Activated naive CD4-positive, alpha-beta T cell treated with anti-CD3 and anti-CD28 coated beads for 36 hours (primary cell): ENCODE measurements at regions of chr2 and their contacts with region 1.

Region 1: DNA sequence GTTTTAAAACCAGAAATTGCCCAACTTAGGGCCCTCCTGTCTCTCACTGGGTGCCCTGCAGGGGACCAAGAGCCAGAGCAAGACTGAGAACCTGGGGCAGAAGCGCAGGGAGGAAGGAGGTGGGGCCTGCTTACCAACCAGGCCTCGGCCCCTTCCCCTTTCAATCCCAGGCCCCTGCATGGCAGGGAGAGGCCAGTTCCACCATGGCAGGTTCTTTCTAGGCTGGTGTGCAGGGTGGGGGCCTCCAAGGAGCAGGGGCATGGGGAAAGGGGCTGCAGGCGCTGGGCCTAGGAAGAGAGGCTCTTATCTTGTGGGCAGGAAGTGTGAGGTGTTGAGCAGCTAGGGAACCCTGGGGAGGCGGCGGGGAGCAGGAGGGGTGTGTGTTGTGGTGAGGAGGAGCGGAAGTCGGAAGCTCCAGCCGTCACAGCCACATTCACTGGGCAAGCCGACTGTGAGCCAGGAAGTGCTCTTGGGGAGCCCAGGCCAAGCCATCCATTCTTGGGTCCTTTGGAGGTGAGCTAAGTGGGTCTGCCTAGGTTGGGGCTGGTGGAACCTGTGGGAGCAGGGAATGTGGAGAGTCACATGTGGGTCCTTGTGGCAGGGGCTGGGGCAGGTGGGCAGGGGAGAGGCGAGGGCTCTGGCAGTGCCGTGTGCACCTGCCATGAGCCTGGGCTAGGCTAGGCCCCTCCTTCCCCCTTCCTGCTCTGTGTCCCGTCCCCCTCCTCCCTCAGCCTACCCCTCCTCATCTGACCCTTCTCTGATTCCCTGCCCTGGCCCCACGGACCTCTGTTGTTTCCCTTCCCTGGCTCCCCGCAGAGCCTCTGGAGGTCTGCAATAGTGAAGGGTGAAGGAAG is at the start of gene PSD4:
- DNase-seq: peak; percentile 96
- H3K4me3 Mint-ChIP-seq: peak within 1 kb of the TSS; percentile 95
- H3K27ac Mint-ChIP-seq: peak within 1 kb of the TSS; percentile 97
- H3K4me1 Mint-ChIP-seq: peaks cover 77% of the 10 kb centered on the region
- H3K27me3 Mint-ChIP-seq: no peaks in the 10 kb centered on the region
- total RNA-seq, gene PSD4: 85.9 to 87.4 TPM

Region 2: DNA sequence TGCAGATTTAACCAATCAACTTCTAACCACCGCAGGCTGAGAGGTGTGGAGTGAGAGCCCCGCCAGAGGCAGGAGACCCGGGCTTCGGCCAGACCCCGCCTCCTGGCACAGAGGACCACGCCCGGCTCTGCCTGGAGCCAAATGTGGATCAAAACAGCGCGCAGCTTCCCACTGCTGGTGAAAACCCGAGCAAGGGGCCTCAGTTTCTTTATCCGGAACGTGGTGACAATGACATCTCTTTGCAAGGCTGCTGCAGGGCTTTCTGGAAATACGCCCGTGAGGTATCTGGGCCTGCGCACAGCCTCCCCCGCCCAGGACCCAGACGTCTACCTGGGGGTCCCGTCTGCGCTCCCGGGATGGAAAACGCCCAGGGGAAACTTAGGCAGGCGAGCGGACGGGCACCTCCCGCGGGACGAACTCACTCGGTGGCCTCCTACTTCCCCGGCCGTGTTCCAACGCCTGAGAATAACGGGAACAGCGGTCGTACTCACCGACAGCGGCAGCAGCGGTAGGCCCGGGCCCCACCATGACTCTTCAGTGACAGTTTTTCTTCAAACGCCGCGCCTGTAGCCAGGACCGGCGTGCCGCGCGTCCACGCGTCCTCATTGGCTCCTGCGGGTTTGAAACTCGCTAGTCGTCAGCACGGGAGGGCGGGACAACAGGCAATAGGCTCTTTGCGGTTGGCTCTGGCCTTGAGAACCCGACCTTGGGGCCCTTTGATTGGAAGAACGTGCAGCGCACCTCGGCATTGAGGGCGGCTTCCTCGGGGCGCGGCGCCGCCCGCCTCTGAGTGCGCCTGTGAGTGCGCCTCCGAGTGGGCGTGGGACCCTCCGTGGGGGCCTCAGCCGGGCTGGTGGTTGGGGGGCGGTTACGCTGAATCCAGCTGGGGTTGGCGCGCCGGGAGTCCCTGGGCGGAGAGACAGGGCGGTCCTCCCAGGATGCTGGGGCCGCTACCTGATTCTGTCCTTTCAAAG is 409.4 kb before region 1 on chr2 and contains the start of gene CKAP2L:
- CTCF ChIA-PET with region 1: no interaction called
- intact Hi-C with region 1: loop called (anchors 5 kb)
- DNase-seq: peak; percentile 99
- H3K4me3 Mint-ChIP-seq: peak within 1 kb of the TSS; percentile 98
- H3K27ac Mint-ChIP-seq: peak within 1 kb of the TSS; percentile 93
- H3K4me1 Mint-ChIP-seq: peaks cover 18% of the 10 kb centered on the region
- H3K27me3 Mint-ChIP-seq: no peaks in the 10 kb centered on the region
- total RNA-seq, gene CKAP2L: 49.2 to 50.8 TPM

Region 3: DNA sequence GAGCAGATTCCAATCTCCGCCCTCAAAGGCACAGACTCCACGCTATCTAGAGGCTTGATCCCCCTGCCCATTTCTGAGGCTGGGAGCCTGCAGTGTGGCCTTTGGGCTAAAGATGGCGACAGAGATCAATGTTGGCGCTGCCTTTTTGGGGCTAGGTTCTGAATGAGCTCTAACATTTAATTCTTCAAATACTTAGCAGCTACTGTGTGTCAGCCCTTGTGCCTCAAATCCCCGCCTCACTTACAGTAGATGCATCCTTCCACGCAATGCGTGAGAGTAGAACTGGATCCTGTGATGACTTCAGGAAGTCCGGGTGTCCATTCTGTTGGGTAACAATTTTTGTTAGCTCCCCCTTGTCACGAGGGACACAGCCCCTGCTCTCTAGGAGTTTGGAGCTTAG is 93.6 kb before region 1 on chr2:
- CTCF ChIA-PET with region 1: interaction called, 11 read pairs
- intact Hi-C with region 1: loop called (anchors 5 kb)
- DNase-seq: peak; percentile 73
- H3K4me3 Mint-ChIP-seq: no peak overlapping the region
- H3K27ac Mint-ChIP-seq: no peak overlapping the region
- H3K4me1 Mint-ChIP-seq: peaks cover 12% of the 10 kb centered on the region
- H3K27me3 Mint-ChIP-seq: no peaks in the 10 kb centered on the region

Region 4: GRCh38 chr2:113105047-113105785 is 68.6 kb before region 1 on chr2:
- CTCF ChIA-PET with region 1: no interaction called
- intact Hi-C with region 1: loop called (anchors 2 kb)
- DNase-seq: peak; percentile 70
- H3K4me3 Mint-ChIP-seq: no peak overlapping the region
- H3K27ac Mint-ChIP-seq: peak overlapping the region; percentile 88
- H3K4me1 Mint-ChIP-seq: peaks cover 25% of the 10 kb centered on the region
- H3K27me3 Mint-ChIP-seq: peaks cover 2% of the 10 kb centered on the region

Region 5: DNA sequence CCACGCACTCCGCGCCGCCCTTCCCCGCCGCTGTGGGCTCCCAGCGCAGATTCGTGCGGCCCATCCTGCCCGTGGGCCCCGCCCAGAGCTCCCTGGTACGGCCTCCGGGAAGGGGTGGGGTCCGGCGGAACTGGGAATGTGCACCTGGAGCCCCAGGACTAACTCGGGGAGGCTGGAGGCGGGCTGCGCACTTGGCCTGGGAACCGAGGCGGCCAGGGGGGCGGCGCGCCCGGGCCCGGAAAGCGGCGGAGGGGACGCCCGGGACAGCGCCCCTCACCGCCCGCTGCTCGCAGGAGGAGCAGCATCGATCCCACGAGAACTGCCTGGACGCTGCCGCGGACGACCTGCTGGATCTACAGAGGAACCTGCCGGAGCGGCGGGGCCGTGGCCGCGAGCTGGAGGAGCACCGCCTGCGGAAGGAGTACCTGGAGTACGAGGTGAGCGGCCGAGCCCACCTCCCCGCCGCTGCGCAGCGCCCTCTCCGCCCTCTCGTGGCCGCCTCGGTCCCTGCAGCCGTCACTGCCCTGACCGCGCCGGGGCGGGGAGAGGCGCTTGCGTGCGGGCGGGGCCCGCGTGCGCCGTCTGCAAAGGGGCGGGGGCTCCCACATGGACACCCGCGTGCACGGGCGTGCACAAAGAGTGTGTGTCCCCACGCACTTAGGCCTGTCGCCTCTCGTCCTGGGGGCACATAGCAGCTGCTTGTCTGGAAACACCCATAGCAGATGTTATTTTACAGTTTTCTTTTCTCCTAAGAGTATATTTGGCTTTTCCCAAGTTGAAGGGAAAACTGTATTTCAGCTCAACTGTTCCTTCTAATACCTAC is 25.2 kb after region 1 on chr2:
- CTCF ChIA-PET with region 1: interaction called, 11 read pairs
- intact Hi-C with region 1: loop called (anchors 1 kb)
- DNase-seq: peak; percentile 81
- H3K4me3 Mint-ChIP-seq: no peak overlapping the region
- H3K27ac Mint-ChIP-seq: peak overlapping the region; percentile 16
- H3K4me1 Mint-ChIP-seq: peaks cover 23% of the 10 kb centered on the region
- H3K27me3 Mint-ChIP-seq: no peaks in the 10 kb centered on the region

Region 6: DNA sequence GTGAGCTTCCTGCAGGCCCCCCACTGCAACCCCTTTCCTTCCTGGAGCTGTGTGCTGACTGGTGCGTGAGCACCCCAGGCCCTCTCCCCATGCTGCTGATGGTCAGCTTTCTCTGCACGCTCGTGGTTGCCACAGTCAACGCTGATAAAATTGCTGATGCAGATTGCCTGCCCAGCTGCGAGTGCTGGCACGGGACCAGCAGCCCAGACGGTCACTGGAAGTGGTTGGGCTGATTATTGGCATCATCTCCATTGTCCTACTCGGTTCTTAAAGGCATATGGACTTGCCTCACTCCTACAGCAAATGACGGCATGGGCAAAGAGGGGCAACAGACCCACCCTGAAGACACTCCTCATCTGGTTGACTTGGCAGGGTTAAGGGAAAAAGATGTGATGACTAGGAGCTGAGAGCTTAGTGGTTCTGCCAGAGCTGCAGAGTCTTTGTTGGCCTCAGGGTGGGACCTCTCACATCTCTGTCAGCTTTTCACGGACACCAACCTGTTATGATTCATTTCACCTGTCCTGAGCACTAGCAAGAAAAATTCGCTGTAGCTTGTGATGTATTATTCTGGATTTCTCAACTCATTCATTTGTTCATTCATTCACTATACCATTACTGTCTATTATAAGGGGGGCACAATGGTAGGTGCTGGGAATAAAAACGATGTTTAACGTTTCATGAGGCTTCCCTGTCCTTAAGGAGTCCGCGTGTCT is 66.5 kb after region 1 on chr2:
- CTCF ChIA-PET with region 1: interaction called, 4 read pairs
- intact Hi-C with region 1: loop called (anchors 2 kb)
- DNase-seq: no peak
- H3K4me3 Mint-ChIP-seq: no peak overlapping the region
- H3K27ac Mint-ChIP-seq: peak overlapping the region; percentile 69
- H3K4me1 Mint-ChIP-seq: peaks cover 38% of the 10 kb centered on the region
- H3K27me3 Mint-ChIP-seq: no peaks in the 10 kb centered on the region

Region 7: GRCh38 chr2:113324684-113325160 is 151.0 kb after region 1 on chr2:
- CTCF ChIA-PET with region 1: no interaction called
- intact Hi-C with region 1: no loop called
- DNase-seq: peak; percentile 60
- H3K4me3 Mint-ChIP-seq: peak overlapping the region; percentile 75
- H3K27ac Mint-ChIP-seq: no peak overlapping the region
- H3K4me1 Mint-ChIP-seq: peaks cover 21% of the 10 kb centered on the region
- H3K27me3 Mint-ChIP-seq: peaks cover 4% of the 10 kb centered on the region